T-cell (primary cell): ENCODE measurements at regions of chr2 and their contacts with region 1.

Region 1: DNA sequence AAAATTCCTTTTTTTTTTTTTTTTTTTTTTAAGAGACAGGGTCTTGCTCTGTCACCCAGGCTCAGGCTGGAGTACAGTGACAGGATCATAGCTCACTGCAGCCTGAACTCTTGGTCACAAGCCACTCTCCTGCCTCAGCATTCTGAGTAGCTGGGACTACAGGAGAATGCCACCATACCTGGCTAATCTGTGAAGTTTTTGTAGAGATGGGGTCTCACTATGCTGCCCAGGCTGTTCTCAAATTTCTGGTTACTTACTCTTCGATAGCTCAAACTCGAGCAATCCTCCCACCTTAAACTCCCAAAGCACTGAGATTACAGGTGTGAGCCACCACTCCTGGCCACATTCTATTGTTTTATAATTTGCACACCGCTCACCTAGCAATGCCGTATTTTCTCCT is 27.0 kb downstream of the RNF149 start:
- DNase-seq: no peak
- ATAC-seq: no peak
- H3K4me3 ChIP-seq: no peak overlapping the region
- H3K4me3 Mint-ChIP-seq: no peak overlapping the region
- H3K27ac ChIP-seq: no peak overlapping the region
- H3K27ac Mint-ChIP-seq: peak overlapping the region; percentile 3 to 18
- H3K4me1 ChIP-seq: no peaks in the 10 kb centered on the region
- H3K4me1 Mint-ChIP-seq: peaks cover 24 to 53% (median 46%) of the 10 kb centered on the region in 3 donors
- H3K27me3 ChIP-seq: no peaks in the 10 kb centered on the region
- H3K27me3 Mint-ChIP-seq: no peaks in the 10 kb centered on the region

Region 2: GRCh38 chr2:101238930-101239759 is 42.3 kb before region 1 on chr2:
- CTCF ChIA-PET with region 1: no interaction called
- POLR2A ChIA-PET with region 1: no interaction called
- DNase-seq: no peak
- ATAC-seq: no peak
- H3K4me3 ChIP-seq: no peak overlapping the region
- H3K4me3 Mint-ChIP-seq: no peak overlapping the region
- H3K27ac ChIP-seq: no peak overlapping the region
- H3K27ac Mint-ChIP-seq: no peak overlapping the region
- H3K4me1 ChIP-seq: no peaks in the 10 kb centered on the region
- H3K4me1 Mint-ChIP-seq: peaks cover 3 to 12% (median 5%) of the 10 kb centered on the region in 3 donors
- H3K27me3 ChIP-seq: no peaks in the 10 kb centered on the region
- H3K27me3 Mint-ChIP-seq: no peaks in the 10 kb centered on the region

Region 3: DNA sequence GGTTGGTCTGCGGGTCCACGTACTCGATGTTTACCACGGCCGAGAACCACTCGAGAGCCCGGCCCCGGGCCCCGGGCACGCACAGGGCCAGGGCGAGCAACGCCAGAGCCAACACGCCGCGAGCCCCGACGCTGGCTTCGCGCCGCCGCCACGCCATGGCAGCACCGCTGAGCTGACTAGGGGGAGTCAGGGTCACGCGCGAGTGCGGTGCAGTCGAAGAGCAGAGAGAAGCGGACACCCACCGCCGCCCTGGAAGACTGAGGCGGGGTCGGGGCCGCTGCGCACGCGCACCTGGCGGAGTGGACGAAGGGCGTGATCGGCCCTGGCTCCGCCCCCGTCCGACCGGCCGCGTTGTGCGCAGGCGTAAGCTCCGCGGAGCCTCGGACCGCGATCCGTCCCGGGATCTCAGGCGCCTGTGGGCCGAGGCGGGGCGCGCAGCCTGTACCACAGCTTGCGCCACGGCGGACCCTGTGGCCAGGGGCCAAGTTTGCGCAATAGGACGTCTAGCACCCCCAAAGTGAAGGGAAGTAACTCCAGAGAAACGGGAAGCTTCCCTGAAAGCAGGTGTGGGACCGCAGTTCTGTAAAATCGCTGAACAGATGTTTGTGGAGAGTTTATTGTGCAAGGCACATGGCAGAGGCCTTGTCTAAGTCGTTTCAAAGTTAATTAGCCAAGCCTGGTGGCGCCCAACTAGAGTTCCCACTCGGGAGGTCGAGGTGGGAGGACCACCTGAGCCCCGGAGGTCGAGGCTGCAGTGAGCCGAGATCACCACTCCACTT is 27.1 kb after region 1 on chr2 and contains the start of gene RNF149:
- CTCF ChIA-PET with region 1: interaction called in 1 of 2 experiments, 3 read pairs
- POLR2A ChIA-PET with region 1: interaction called, 4 to 23 read pairs
- DNase-seq: peak; percentile 70 to 94 (median 84)
- ATAC-seq: peak; percentile 74 to 81 (median 77)
- H3K4me3 ChIP-seq: peak within 1 kb of the TSS; percentile 92 to 99
- H3K4me3 Mint-ChIP-seq: peak within 1 kb of the TSS; percentile 93 to 98 (median 98)
- H3K27ac ChIP-seq: peak within 1 kb of the TSS; percentile 94
- H3K27ac Mint-ChIP-seq: peak within 1 kb of the TSS; percentile 99
- H3K4me1 ChIP-seq: peaks cover 44 to 64% of the 10 kb centered on the region in 2 experiments
- H3K4me1 Mint-ChIP-seq: peaks cover 74 to 81% (median 77%) of the 10 kb centered on the region in 3 donors
- H3K27me3 ChIP-seq: no peaks in the 10 kb centered on the region
- H3K27me3 Mint-ChIP-seq: no peaks in the 10 kb centered on the region
- total RNA-seq, gene RNF149: 114 to 139 (median 123) TPM